IMR-90 (cell line): ENCODE measurements at regions of chr11 and their contacts with region 1.

Region 1: DNA sequence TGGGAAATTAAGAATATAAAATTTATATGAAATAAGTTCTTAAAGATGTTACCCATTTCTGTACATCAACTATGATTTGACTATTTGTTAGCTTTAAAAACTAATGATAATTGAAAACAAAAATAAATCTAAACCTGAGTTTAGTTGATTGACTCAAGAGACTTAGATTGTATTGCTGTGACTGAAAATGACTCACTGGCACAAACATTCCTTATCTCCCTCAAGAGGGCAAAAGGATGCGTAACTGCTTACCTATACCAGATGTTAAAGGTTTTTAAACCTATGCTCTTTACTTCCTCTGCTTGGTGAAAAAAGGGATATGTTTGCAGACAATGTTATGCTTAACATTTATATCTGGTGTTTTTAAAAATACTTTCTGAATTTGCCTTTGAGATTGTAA is 30.3 kb downstream of the ATM start:
- DNase-seq: peak; percentile 40
- ATAC-seq: no peak; the same call in 1 of the 2 replicates
- H3K4me3 ChIP-seq: no peak overlapping the region
- H3K27ac ChIP-seq: no peak overlapping the region
- H3K4me1 ChIP-seq: no peaks in the 10 kb centered on the region; the same call in 1 of the 2 replicates
- H3K27me3 ChIP-seq: no peaks in the 10 kb centered on the region
- CTCF ChIP-seq: no peak
- POLR2A ChIP-seq: no peak
- RAD21 ChIP-seq: no peak

Region 2: DNA sequence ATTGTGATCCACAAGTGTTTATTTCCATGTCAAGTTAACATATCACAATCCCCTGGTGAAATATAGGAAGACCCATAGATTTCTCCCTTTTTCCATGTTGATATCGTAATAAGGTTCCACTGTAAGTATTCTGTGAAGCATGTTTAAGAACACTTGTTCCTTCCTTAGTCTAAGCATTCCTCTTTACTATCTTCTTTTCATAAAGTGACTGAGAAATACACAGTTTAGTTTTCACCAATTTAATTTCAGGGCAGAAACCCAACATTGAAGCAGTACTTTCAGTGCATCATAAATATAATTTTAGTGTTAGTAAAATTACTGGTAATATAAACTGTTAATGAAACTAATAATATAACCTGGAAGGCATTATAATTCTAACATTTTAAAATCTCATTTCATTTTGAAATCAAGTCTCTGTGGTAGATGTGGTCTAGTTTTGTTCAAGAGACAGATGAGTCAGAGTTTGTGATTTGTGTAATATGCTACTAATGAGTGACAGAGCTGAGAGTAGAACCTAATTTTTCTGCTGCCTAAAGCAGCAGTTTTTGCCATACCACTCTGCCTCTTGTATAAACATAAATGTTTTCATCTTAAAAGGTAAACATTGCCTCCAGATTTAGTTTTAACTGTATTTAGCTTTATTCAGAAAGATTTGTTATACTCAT is 49.1 kb after region 1 on chr11:
- CTCF ChIA-PET with region 1: no interaction called
- POLR2A ChIA-PET with region 1: no interaction called
- dilution Hi-C with region 1: no loop called
- in situ Hi-C with region 1: no loop called
- intact Hi-C with region 1: loop called (anchors 5 kb)
- DNase-seq: peak; percentile 52
- ATAC-seq: peak; percentile 62
- H3K4me3 ChIP-seq: no peak overlapping the region
- H3K27ac ChIP-seq: no peak overlapping the region
- H3K4me1 ChIP-seq: peaks cover 8% of the 10 kb centered on the region
- H3K27me3 ChIP-seq: no peaks in the 10 kb centered on the region
- CTCF ChIP-seq: no peak
- POLR2A ChIP-seq: no peak
- RAD21 ChIP-seq: no peak